ENCODE measurements at regions of chr3 and their contacts with region 1.

Region 1: GRCh38 chr3:30751610-30752299 is 142.7 kb downstream of the GADL1 start:
- DNase-seq: peak; percentile 24
- H3K4me3 ChIP-seq: no peak overlapping the region
- H3K27ac ChIP-seq: no peak overlapping the region
- H3K4me1 ChIP-seq: peaks cover 31% of the 10 kb centered on the region
- H3K27me3 ChIP-seq: no peaks in the 10 kb centered on the region
- CTCF ChIP-seq: peak; percentile 19 to 22

Region 2: GRCh38 chr3:29285471-29286071 is 1466.2 kb before region 1 on chr3:
- CTCF ChIA-PET with region 1: no interaction called
- dilution Hi-C with region 1: no loop called
- in situ Hi-C with region 1: no loop called
- intact Hi-C with region 1: loop called (anchors 5 kb)
- DNase-seq: peak; percentile 76
- H3K4me3 ChIP-seq: peak overlapping the region; percentile 40 to 53 (median 52)
- H3K27ac ChIP-seq: peak overlapping the region; percentile 93
- H3K4me1 ChIP-seq: peaks cover 13% of the 10 kb centered on the region
- H3K27me3 ChIP-seq: no peaks in the 10 kb centered on the region
- CTCF ChIP-seq: no peak

Region 3: GRCh38 chr3:30042274-30042859 is 709.4 kb before region 1 on chr3:
- CTCF ChIA-PET with region 1: no interaction called
- dilution Hi-C with region 1: no loop called
- in situ Hi-C with region 1: no loop called
- intact Hi-C with region 1: loop called (anchors 1 kb)
- DNase-seq: peak; percentile 39
- H3K4me3 ChIP-seq: no peak overlapping the region
- H3K27ac ChIP-seq: no peak overlapping the region
- H3K4me1 ChIP-seq: no peaks in the 10 kb centered on the region
- H3K27me3 ChIP-seq: no peaks in the 10 kb centered on the region
- CTCF ChIP-seq: peak; percentile 72 to 75

Region 4: GRCh38 chr3:30112902-30113484 is 638.8 kb before region 1 on chr3:
- CTCF ChIA-PET with region 1: no interaction called
- dilution Hi-C with region 1: no loop called
- in situ Hi-C with region 1: no loop called
- intact Hi-C with region 1: loop called (anchors 1 kb)
- DNase-seq: peak; percentile 31
- H3K4me3 ChIP-seq: no peak overlapping the region
- H3K27ac ChIP-seq: no peak overlapping the region
- H3K4me1 ChIP-seq: peaks cover 2% of the 10 kb centered on the region
- H3K27me3 ChIP-seq: no peaks in the 10 kb centered on the region
- CTCF ChIP-seq: peak; percentile 58 to 63

Region 5: GRCh38 chr3:30864836-30865235 is 113.1 kb after region 1 on chr3:
- CTCF ChIA-PET with region 1: no interaction called
- dilution Hi-C with region 1: no loop called
- in situ Hi-C with region 1: no loop called
- intact Hi-C with region 1: no loop called
- DNase-seq: no peak
- H3K4me3 ChIP-seq: no peak overlapping the region
- H3K27ac ChIP-seq: no peak overlapping the region
- H3K4me1 ChIP-seq: no peaks in the 10 kb centered on the region
- H3K27me3 ChIP-seq: peaks cover 7% of the 10 kb centered on the region
- CTCF ChIP-seq: no peak

Measured in mammary epithelial cell (primary cell).